Heart left ventricle (tissue), 16 donors: ENCODE measurements at regions of chr20 and their contacts with region 1.

Region 1: DNA sequence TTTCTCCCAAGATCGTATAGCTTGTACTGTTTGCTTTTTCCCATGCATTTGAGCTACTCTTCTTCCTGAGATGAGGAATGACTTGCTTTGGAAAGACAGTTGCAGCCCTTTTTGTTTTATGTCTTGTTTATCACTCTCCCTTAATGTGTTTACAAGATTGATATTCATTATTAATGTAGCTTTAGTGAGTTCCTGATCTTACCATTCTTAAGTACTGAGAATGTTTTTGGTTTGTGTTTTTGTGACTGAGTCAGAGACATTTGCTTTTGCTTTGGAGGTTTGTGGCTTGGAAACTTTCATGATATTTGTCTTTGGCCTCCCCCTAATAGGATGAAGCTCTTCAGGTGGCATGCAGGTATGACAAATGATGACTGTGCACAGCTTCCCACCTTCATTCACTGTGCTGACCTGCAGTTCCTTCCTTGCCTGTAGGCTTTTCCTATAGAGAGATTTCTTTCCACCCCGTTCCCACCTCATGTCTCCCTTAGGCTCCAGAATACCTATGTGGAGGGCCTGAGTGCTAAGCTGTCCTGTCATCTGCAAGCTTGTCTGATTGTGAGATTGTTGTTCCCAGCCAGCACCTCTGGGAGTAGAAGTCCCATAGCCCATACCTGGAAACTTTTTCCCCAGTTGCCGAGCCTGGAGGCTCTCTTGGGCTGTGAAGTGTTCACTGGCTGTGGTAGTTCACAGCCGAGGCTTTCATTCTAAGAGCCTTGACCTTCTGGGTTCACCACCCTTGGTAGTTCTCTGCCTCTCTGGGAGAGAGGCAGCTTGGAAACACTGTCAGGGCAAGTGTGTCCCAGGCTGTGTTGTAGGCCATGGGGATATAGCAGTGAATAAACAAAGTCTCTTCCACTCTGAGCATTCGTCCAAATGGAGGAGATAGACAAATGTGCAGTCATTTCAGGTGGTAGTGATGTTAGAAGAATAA is 27.1 kb downstream of the CDS2 start:
- DNase-seq: no peak
- ATAC-seq: peak in 1 of 4 donors; percentile 27
- H3K4me3 ChIP-seq: no peak overlapping the region
- H3K27ac ChIP-seq: peak overlapping the region in 3 of 12 donors; percentile 6 to 26 (median 20)
- H3K4me1 ChIP-seq: peaks cover 7 to 95% (median 75%) of the 10 kb centered on the region in 12 donors
- H3K27me3 ChIP-seq: no peaks in the 10 kb centered on the region
- CTCF ChIP-seq: no peak
- POLR2A ChIP-seq: no peak

Region 2: GRCh38 chr20:5168651-5169396 is 14.9 kb after region 1 on chr20:
- intact Hi-C with region 1: loop called in 1 of 10 experiments (anchors 2 kb)
- DNase-seq: peak in 4 of 5 donors; percentile 60 to 69 (median 64)
- ATAC-seq: peak; percentile 23 to 67 (median 52)
- H3K4me3 ChIP-seq: peak overlapping the region in 1 of 12 donors; percentile 1
- H3K27ac ChIP-seq: peak overlapping the region in 11 of 12 donors; percentile 63 to 86 (median 79)
- H3K4me1 ChIP-seq: peaks cover 30 to 100% (median 93%) of the 10 kb centered on the region in 12 donors
- H3K27me3 ChIP-seq: no peaks in the 10 kb centered on the region
- CTCF ChIP-seq: no peak
- POLR2A ChIP-seq: peak in 1 of 2 donors; percentile 44